Transverse colon (tissue), 4 donors: ENCODE measurements at regions of chr18 and their contacts with region 1.

Region 1: GRCh38 chr18:33459612-33460011 is 19.1 kb upstream of the CCDC178 start:
- DNase-seq: no peak
- H3K4me3 ChIP-seq: no peak overlapping the region
- H3K27ac ChIP-seq: no peak overlapping the region
- H3K4me1 ChIP-seq: no peaks in the 10 kb centered on the region
- H3K27me3 ChIP-seq: no peaks in the 10 kb centered on the region
- CTCF ChIP-seq: no peak
- EP300 ChIP-seq: no peak
- POLR2A ChIP-seq: no peak

Region 2: GRCh38 chr18:33513027-33513426 is 53.4 kb after region 1 on chr18:
- in situ Hi-C with region 1: loop called in 1 of 4 experiments (anchors 10 kb)
- intact Hi-C with region 1: no loop called
- DNase-seq: no peak
- H3K4me3 ChIP-seq: no peak overlapping the region
- H3K27ac ChIP-seq: no peak overlapping the region
- H3K4me1 ChIP-seq: no peaks in the 10 kb centered on the region
- H3K27me3 ChIP-seq: no peaks in the 10 kb centered on the region
- CTCF ChIP-seq: no peak
- EP300 ChIP-seq: no peak
- POLR2A ChIP-seq: no peak